ENCODE measurements at regions of chr1 and their contacts with region 1.

Region 1: GRCh38 chr1:181088079-181089016 is at the start of gene IER5:
- DNase-seq: peak; percentile 91 to 98
- H3K4me3 ChIP-seq: peak within 1 kb of the TSS; percentile 89 to 97
- H3K27ac ChIP-seq: peak within 1 kb of the TSS; percentile 94 to 97
- H3K4me1 ChIP-seq: peaks cover 4 to 11% of the 10 kb centered on the region in 2 donors
- H3K27me3 ChIP-seq: no peaks in the 10 kb centered on the region
- CTCF ChIP-seq: peak in 1 of 3 experiments; percentile 9
- total RNA-seq, gene IER5: 47.9 TPM

Region 2: GRCh38 chr1:180154325-180155181 is 933.8 kb before region 1 on chr1 and contains the start of gene QSOX1:
- intact Hi-C with region 1: loop called (anchors 5 kb)
- DNase-seq: peak; percentile 59 to 93
- H3K4me3 ChIP-seq: peak within 1 kb of the TSS; percentile 82 to 85
- H3K27ac ChIP-seq: peak within 1 kb of the TSS; percentile 82 to 85
- H3K4me1 ChIP-seq: peaks cover 4 to 17% of the 10 kb centered on the region in 2 donors
- H3K27me3 ChIP-seq: no peaks in the 10 kb centered on the region
- CTCF ChIP-seq: peak in 2 of 3 experiments; percentile 12 to 37
- total RNA-seq, gene QSOX1: 200 TPM

Region 3: DNA sequence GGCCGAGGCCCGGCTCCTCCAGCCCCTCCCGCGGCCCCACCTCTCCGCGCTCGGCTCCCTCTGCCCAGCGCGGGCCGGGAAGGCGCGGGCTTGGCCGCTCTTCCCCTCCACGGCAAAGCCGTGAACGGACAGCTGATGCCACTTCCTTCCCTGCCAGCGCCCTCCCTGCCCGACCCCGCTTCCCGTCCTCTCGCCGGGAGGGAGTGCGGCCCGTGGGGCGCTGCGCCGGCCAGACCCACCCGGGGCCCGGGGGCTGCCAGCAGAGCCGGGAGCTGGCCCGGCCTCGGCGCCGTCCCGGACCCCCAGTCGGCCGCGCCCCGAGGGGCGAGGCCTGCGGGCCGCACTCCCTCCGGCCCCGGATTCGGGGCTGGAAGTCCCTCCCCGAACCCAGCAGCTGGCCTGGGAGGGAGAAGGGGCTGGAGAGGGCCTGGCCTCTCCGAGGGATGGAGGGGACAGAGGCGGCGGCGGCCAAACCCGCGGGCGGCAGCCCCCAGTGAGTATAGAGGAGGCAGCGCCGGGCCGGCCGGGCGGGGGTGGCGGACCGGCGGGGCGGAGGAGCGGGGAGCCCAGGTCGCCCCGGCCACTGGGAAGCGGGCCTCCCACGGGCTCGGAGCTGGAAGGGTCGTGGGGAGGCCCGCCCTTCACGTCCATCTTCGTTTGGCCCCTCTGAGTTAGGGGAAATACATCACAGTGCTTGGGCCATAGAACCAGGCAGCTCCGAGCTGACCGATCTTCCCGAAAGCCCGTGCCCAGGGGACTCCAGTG is 175.4 kb before region 1 on chr1 and contains the start of gene KIAA1614:
- intact Hi-C with region 1: loop called (anchors 5 kb)
- DNase-seq: peak in 1 of 2 donors; percentile 66
- H3K4me3 ChIP-seq: peak within 1 kb of the TSS; percentile 62 to 88
- H3K27ac ChIP-seq: peak within 1 kb of the TSS; percentile 86 to 97
- H3K4me1 ChIP-seq: peaks cover 0 to 8% of the 10 kb centered on the region in 2 donors
- H3K27me3 ChIP-seq: no peaks in the 10 kb centered on the region
- CTCF ChIP-seq: no peak
- total RNA-seq, gene KIAA1614: 21.9 TPM

Region 4: GRCh38 chr1:181014477-181015250 is 73.7 kb before region 1 on chr1:
- intact Hi-C with region 1: no loop called
- DNase-seq: no peak
- H3K4me3 ChIP-seq: no peak overlapping the region
- H3K27ac ChIP-seq: no peak overlapping the region
- H3K4me1 ChIP-seq: peaks cover 0 to 32% of the 10 kb centered on the region in 2 donors
- H3K27me3 ChIP-seq: no peaks in the 10 kb centered on the region
- CTCF ChIP-seq: no peak

Region 5: GRCh38 chr1:181033799-181034451 is 54.4 kb before region 1 on chr1 and contains the start of gene MR1:
- intact Hi-C with region 1: loop called (anchors 2 kb)
- DNase-seq: peak in 1 of 2 donors; percentile 68
- H3K4me3 ChIP-seq: peak within 1 kb of the TSS; percentile 46 to 67
- H3K27ac ChIP-seq: peak within 1 kb of the TSS; percentile 94 to 96
- H3K4me1 ChIP-seq: peaks cover 0 to 28% of the 10 kb centered on the region in 2 donors
- H3K27me3 ChIP-seq: no peaks in the 10 kb centered on the region
- CTCF ChIP-seq: no peak
- total RNA-seq, gene MR1: 19.2 TPM

Region 6: DNA sequence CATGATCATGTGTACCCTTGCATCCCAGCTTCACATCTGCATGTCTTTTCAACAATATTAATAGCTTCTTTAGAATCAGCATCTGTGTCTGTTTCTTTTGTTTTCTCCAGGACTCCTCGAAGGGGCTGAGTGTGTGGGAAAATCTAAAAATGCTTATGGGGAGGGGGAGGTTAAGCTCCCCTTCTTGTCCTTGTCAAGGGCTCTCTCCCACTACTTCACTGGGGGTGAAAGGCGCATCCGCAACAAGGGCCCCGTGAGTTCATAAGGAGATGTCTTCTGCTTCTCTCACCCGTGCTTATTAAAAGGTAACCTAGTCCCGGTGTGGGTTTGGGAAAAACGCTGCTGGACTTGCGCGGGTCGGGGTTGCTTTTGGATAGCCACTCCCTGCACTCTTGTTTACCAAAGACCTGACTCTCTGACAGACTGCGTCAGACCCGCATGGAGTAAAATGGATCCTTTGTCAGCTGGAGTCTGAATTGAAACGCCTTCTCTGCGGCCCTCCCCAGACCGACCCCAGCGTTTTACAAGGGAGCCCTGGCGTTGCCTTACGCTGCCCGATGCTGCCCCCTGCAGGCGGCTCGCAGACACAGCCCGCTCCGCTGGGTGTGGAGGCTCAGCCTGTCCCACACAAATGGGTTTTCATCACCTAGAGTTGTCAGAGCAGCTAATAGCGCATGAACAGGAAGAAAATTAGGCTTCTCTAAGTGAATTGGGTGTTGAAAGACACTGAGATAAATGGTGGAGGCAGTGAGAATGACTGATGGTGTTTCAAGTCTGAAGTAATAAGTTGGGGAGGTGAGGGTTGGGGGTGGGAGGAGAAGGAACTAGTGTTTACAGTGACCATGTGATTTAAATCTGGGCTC is 54.0 kb after region 1 on chr1:
- intact Hi-C with region 1: loop called (anchors 1 kb)
- DNase-seq: peak; percentile 56 to 93
- H3K4me3 ChIP-seq: peak overlapping the region in 1 of 2 donors; percentile 58
- H3K27ac ChIP-seq: peak overlapping the region; percentile 82 to 83
- H3K4me1 ChIP-seq: peaks cover 14 to 20% of the 10 kb centered on the region in 2 donors
- H3K27me3 ChIP-seq: no peaks in the 10 kb centered on the region
- CTCF ChIP-seq: peak; percentile 91 to 98 (median 98)

Region 7: GRCh38 chr1:181317261-181317930 is 229.0 kb after region 1 on chr1:
- intact Hi-C with region 1: no loop called
- DNase-seq: no peak
- H3K4me3 ChIP-seq: no peak overlapping the region
- H3K27ac ChIP-seq: no peak overlapping the region
- H3K4me1 ChIP-seq: no peaks in the 10 kb centered on the region
- H3K27me3 ChIP-seq: no peaks in the 10 kb centered on the region
- CTCF ChIP-seq: no peak

Measured in ascending aorta (tissue), 2 donors.